A673 (cell line): ENCODE measurements at regions of chr1 and their contacts with region 1.

Region 1: DNA sequence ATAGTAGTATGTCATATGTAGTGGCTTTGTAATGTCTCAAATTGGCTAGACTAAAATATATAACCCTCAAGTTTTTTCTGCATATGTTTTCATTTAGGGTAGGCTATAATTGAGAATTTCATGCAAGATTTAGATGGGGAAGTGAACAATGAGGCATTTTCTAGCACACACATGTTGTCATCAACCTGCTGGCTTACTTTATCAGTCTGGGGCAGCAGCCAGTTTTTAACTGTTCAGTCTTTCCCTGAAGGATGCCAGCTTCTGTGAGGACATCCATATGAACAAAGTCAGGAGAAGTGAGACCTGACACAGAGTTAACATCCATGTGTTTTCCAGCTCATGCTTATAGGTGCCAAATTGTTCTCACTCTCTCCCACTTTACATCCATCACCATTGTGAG is 74.7 kb upstream of the OLFM3 start:
- DNase-seq: peak; percentile 53
- H3K4me3 ChIP-seq: no peak overlapping the region
- H3K27ac ChIP-seq: no peak overlapping the region
- H3K4me1 ChIP-seq: peaks cover 29% of the 10 kb centered on the region
- H3K27me3 ChIP-seq: no peaks in the 10 kb centered on the region
- CTCF ChIP-seq: no peak

Region 2: DNA sequence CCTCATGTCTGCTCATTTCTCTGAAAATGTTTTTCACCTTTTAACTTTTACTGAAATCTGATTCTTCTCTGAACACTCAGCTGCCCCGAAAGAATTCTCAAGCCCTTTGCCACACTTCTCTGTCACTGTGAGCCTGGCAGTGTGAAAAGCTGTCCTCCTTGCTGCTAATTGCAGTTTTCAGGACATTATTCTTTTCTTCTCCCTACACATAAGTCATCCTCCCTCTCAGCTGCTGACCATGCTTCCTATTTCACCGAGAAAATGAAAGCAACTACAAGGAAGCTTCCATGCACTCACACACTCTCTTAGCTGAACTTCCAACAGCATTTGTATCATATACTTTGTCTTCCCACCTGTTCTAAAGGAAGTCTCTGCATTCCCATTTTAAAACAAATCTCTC is 90.5 kb before region 1 on chr1:
- CTCF ChIA-PET with region 1: no interaction called
- POLR2A ChIA-PET with region 1: no interaction called
- intact Hi-C with region 1: no loop called
- DNase-seq: no peak
- H3K4me3 ChIP-seq: no peak overlapping the region
- H3K27ac ChIP-seq: peak overlapping the region; percentile 44
- H3K4me1 ChIP-seq: peaks cover 22% of the 10 kb centered on the region
- H3K27me3 ChIP-seq: no peaks in the 10 kb centered on the region
- CTCF ChIP-seq: no peak

Region 3: GRCh38 chr1:102163799-102164198 is 92.3 kb after region 1 on chr1:
- CTCF ChIA-PET with region 1: no interaction called
- POLR2A ChIA-PET with region 1: no interaction called
- intact Hi-C with region 1: no loop called
- DNase-seq: peak; percentile 27
- H3K4me3 ChIP-seq: no peak overlapping the region
- H3K27ac ChIP-seq: no peak overlapping the region
- H3K4me1 ChIP-seq: peaks cover 23% of the 10 kb centered on the region
- H3K27me3 ChIP-seq: no peaks in the 10 kb centered on the region
- CTCF ChIP-seq: no peak

Region 4: DNA sequence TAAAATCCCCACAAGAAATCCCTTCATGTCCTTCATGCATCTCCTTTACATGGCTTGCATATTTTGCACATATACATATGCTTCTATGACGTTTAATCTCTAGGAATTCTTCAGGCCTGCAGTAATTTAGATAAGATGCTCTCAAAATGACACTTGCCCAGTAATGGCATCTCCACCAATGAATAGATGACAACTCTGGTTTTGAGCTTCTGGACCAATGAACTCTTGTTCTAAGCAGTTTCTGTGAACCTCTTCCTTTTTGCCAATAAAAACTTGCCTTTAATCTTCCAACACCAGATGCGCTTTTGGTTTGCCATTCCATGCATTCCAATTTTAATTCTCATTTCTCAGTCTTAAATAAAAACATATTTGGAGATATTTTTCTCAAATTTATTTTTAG is 115.1 kb after region 1 on chr1:
- CTCF ChIA-PET with region 1: no interaction called
- POLR2A ChIA-PET with region 1: no interaction called
- intact Hi-C with region 1: loop called (anchors 10 kb)
- DNase-seq: peak; percentile 52
- H3K4me3 ChIP-seq: no peak overlapping the region
- H3K27ac ChIP-seq: peak overlapping the region; percentile 97
- H3K4me1 ChIP-seq: peaks cover 77% of the 10 kb centered on the region
- H3K27me3 ChIP-seq: no peaks in the 10 kb centered on the region
- CTCF ChIP-seq: no peak